GM12878 (cell line): ENCODE measurements at regions of chr1 and their contacts with region 1.

Region 1: DNA sequence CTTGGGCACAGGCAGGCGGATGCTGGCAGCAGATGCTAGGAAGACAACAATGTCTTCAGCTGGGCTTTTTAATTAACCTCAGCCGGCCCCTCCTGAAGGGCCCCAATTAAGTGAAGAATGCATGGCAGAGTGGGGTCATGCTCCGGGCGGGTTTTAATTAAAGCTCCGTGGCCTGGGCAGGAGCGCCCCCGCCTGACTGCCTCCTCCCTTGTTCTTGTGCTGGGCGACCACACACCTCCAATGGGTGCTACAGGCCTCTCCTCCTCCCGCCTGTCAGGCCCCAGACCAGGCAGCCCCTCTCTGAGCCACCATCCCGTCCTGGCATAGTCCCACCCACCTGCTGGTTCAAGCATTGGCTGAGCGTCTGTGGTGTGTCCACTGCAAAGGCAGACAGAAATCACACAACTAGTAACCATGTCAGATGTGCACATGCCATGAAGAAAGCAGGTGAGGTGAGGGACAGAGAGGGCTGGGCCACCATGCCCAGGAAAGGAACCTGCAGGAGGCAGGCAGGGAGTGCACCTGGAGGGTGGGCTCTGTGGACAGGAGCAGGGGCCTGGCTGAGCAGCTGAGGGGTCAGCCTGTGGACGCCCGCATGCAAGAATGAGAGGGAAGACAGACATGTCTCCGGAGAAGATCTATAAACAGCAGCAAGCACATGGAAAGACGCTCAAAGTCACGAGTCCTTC is 8.5 kb upstream of the ARF1 start:
- DNase-seq: no peak
- ATAC-seq: peak; percentile 66
- H3K4me3 ChIP-seq: no peak overlapping the region
- H3K27ac ChIP-seq: no peak overlapping the region
- H3K4me1 ChIP-seq: no peaks in the 10 kb centered on the region
- H3K27me3 ChIP-seq: no peaks in the 10 kb centered on the region
- CTCF ChIP-seq: peak in 2 of 3 experiments; percentile 32 to 48; a peak in 3 of 6 replicates
- EP300 ChIP-seq: no peak
- POLR2A ChIP-seq: no peak
- RAD21 ChIP-seq: no peak

Region 2: GRCh38 chr1:227762233-227762911 is 311.6 kb before region 1 on chr1:
- CTCF ChIA-PET with region 1: no interaction called
- POLR2A ChIA-PET with region 1: no interaction called
- RAD21 ChIA-PET with region 1: no interaction called
- SMC1A ChIA-PET with region 1: no interaction called
- in situ Hi-C with region 1: no loop called
- intact Hi-C with region 1: loop called (anchors 10 kb)
- DNase-seq: no peak
- ATAC-seq: peak; percentile 97
- H3K4me3 ChIP-seq: no peak overlapping the region
- H3K27ac ChIP-seq: no peak overlapping the region
- H3K4me1 ChIP-seq: peaks cover 36% of the 10 kb centered on the region
- H3K27me3 ChIP-seq: no peaks in the 10 kb centered on the region
- CTCF ChIP-seq: peak; percentile 87 to 96 (median 89)
- EP300 ChIP-seq: no peak
- POLR2A ChIP-seq: no peak
- RAD21 ChIP-seq: peak; percentile 85

Region 3: GRCh38 chr1:228004331-228004855 is 69.6 kb before region 1 on chr1:
- CTCF ChIA-PET with region 1: interaction called, 16 read pairs
- POLR2A ChIA-PET with region 1: no interaction called
- RAD21 ChIA-PET with region 1: interaction called, 17 read pairs
- SMC1A ChIA-PET with region 1: interaction called, 4 read pairs
- in situ Hi-C with region 1: no loop called
- intact Hi-C with region 1: loop called (anchors 5 kb)
- DNase-seq: no peak
- ATAC-seq: peak; percentile 83
- H3K4me3 ChIP-seq: no peak overlapping the region
- H3K27ac ChIP-seq: no peak overlapping the region
- H3K4me1 ChIP-seq: no peaks in the 10 kb centered on the region
- H3K27me3 ChIP-seq: peaks cover 2 to 22% of the 10 kb centered on the region in 2 experiments
- CTCF ChIP-seq: peak; percentile 49 to 65 (median 58)
- EP300 ChIP-seq: no peak
- POLR2A ChIP-seq: no peak
- RAD21 ChIP-seq: 0 out of 2 replicates have a peak, but pooled peaks have one; percentile 20

Region 4: DNA sequence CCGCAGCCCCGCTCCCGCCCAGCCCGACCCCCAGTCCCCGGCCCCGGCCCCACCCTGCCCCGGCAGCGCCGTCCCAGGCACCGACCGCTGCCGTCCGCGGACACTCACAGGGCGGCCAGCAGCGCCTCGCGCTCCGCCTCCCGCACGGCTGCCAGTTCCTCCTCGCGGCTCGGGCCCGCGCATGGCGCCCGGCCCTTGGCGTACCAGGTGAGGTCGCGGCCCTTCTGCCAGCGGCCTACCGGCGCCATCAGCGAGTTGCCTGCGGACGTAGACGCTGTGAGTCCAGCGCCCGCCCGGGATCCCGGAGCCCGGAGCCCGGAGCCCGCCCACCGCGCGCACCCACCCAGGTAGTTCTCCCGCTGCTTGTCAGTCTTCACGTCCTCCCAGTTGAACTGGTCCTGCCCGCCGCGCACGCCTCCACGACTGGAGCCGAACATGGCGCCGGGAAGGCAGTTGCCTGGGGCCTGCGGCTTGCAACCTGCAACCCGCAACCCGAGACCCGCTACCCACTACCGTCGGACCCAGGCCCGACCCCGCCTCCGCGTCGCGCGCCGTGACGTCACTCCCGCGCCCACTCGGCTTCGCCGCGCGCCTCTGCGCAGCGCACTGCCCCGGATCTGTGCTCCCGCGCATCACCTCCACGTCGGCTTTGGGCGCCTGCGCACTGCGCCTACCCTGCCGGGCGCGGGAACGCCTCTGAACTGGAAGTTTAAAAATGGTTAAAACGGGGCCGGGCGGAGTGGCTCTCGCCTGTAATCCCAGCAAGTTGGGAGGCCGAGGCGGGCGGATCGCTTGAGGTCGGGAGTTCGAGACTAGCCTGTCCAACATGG is 29.0 kb after region 1 on chr1 and contains the start of gene C1orf35:
- CTCF ChIA-PET with region 1: no interaction called
- POLR2A ChIA-PET with region 1: no interaction called
- RAD21 ChIA-PET with region 1: no interaction called
- SMC1A ChIA-PET with region 1: no interaction called
- in situ Hi-C with region 1: no loop called
- intact Hi-C with region 1: no loop called
- DNase-seq: peak; percentile 66
- ATAC-seq: peak; percentile 87
- H3K4me3 ChIP-seq: peak within 1 kb of the TSS; percentile 87
- H3K27ac ChIP-seq: peak within 1 kb of the TSS; percentile 69
- H3K4me1 ChIP-seq: peaks cover 12% of the 10 kb centered on the region
- H3K27me3 ChIP-seq: no peaks in the 10 kb centered on the region
- CTCF ChIP-seq: no peak
- EP300 ChIP-seq: no peak
- POLR2A ChIP-seq: peak; percentile 80
- RAD21 ChIP-seq: no peak
- polyA plus RNA-seq, gene C1orf35: 2.5 to 4.8 TPM